Heart right ventricle (tissue), 16 donors: ENCODE measurements at regions of chr12 and their contacts with region 1.

Region 1: DNA sequence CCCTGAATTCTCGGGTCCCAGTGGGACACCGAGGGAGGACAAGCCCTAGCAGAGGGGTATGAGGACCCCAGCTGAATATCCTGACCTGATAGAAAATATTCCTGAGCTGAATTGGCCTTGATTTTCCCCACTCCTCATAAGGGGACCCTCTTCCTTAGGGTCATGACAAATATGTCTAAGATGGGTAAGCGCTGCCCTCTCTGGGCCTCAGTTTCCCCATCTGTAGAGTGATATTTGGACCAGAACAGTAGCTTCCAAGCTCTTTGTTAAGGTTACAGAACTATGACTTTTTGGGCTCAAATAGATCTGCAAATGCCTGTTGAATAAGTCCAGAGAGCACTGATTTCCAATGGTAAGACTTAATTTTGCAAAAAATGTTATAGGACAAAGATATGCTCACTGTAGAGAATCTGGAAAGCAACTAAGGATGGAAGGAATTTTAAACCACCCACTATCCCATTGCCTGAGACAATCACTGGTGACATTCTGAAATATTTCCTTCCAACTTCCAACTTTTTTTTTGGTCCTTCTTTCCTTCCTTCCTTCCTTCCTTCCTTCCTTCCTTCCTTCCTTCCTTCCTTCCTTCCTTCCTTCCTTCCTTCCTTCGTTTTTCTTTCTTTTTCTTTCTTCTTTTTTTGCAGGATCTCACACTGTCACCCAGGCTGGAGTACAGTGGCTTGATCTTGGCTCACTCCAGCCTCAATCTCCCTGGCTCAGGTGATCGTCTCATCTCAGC is 32.0 kb downstream of the MYL2 start:
- DNase-seq: no peak
- ATAC-seq: peak in 1 of 8 donors; percentile 9
- H3K4me3 ChIP-seq: peak overlapping the region in 5 of 10 donors; percentile 39 to 60 (median 58)
- H3K27ac ChIP-seq: peak overlapping the region in 1 of 10 donors; percentile 59
- H3K4me1 ChIP-seq: peaks cover 0 to 16% (median 7%) of the 10 kb centered on the region in 9 donors
- H3K27me3 ChIP-seq: no peaks in the 10 kb centered on the region
- CTCF ChIP-seq: peak in 4 of 9 donors; percentile 2 to 43 (median 15)

Region 2: DNA sequence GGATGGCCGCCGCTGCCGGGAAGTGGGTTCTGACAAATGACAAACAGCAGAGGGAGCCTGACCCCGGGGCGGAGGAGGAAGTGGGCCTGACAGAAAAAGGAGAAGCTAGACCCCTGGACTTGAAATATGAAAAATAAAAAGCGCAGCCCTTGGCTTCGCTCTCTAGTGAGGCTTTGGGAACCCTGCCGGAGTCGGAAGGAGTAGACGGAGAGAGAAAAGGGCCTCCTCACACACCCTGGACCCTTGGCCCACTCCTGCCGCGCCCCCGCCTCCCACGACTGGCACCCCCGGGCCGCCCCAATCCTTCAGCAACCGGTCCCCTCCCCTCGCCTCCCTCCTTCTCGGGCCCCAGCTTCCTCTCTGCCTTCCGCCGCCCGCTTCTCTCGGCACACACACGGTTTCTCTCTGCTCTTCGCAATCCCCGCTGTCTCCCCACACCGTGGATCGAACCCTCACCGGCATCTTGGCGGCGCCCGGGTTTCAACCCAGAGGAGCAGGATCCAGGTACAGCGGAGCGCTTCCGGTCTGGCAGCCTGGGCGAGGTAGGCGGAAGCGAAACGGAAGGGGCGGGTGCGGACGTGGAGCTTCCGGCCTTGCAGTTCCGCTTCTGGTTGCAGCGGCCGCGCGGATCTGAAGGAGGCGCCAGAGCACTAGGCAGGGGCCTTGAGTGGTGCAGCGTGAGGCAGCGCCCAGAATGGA is 438.5 kb before region 1 on chr12 and contains the start of gene ARPC3:
- intact Hi-C with region 1: loop called in 4 of 10 experiments (anchors 1 to 10 kb)
- DNase-seq: peak; percentile 94 to 95
- ATAC-seq: peak; percentile 98 to 100 (median 99)
- H3K4me3 ChIP-seq: peak within 1 kb of the TSS; percentile 61 to 95 (median 81)
- H3K27ac ChIP-seq: peak within 1 kb of the TSS; percentile 80 to 99 (median 94)
- H3K4me1 ChIP-seq: peaks cover 0 to 49% (median 22%) of the 10 kb centered on the region in 9 donors
- H3K27me3 ChIP-seq: no peaks in the 10 kb centered on the region
- CTCF ChIP-seq: peak; percentile 69 to 97 (median 88)
- total RNA-seq, gene ARPC3: 71.9 to 168 (median 82.6) TPM

Region 3: DNA sequence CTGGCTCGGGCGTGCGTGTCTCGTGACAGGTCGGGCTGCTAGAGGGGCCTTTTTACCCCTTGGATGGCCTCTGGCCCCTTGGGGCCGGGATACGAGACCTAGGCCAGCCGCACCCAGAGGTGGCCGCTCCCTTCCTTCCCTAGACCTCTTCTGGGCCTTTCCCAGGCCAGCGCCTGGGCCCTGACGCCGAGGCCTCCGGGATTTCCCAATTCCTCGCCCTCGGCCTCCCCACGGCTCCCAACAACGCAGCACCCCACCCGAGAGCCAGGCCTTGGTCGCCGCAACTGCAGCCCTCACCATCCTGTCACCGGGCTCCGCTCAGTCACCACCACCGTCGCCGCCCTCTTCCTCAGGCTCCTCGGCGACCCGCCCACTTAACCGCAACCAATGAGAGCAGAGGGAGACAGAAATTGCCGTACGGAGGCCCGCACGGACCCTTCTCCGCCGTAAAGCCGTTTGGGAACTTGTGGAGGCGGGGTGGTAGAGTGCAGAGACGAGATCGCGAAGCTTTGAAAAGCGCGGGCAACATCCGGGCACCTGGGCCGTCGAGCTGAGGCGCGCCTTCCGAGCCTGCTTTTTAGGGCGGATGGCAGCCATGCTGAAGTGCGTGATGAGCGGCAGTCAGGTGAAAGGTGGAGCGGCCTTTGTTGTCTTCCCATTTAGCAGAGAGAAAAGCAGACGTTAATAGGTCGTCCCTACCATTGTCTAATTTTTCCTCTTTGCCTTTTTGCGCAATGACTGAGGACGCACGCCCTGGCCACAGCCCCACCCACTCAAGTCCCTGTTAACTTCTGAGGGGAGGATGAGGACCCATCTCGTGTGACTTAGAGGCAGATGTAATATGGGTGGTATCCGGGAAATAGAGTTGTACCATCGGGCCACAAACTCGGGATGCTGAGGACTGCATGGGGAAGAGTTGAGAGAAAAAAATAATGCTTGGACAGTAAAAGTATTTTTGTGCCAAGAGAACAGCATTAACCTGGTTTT is 386.4 kb before region 1 on chr12 and contains the starts of genes RAD9B and VPS29:
- intact Hi-C with region 1: loop called in 1 of 10 experiments (anchors 5 kb)
- DNase-seq: peak; percentile 98 to 99
- ATAC-seq: peak; percentile 97 to 100 (median 99)
- H3K4me3 ChIP-seq: peak within 1 kb of the TSS; percentile 70 to 98 (median 85)
- H3K27ac ChIP-seq: peak within 1 kb of the TSS; percentile 59 to 95 (median 91)
- H3K4me1 ChIP-seq: peaks cover 0 to 40% (median 35%) of the 10 kb centered on the region in 9 donors
- H3K27me3 ChIP-seq: no peaks in the 10 kb centered on the region
- CTCF ChIP-seq: no peak
- total RNA-seq, gene RAD9B: 0.23 to 1.6 (median 0.95) TPM
- total RNA-seq, gene VPS29: 83.7 to 117 (median 91.5) TPM

Region 4: DNA sequence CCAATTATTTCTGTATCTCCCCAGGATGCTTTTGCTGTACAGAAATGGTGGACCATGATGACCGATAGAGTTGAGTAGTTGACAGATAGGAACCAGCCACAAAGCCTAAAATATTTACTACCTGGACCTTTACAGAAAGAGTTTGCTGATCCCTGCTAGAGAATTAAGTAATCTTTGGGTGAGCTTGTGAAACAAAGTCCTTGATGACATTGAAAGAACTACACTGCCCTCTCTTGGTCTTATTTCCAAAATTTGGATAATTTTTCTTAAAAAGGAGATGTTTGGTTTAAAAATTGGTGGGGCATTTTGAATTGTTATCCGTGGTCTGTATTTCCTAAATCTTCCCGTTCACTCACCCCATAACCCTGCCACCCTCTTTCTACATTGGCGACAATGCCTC is 288.2 kb before region 1 on chr12:
- intact Hi-C with region 1: loop called in 2 of 10 experiments (anchors 5 to 10 kb)
- DNase-seq: no peak
- ATAC-seq: peak in 3 of 8 donors; percentile 51 to 56 (median 54)
- H3K4me3 ChIP-seq: no peak overlapping the region
- H3K27ac ChIP-seq: peak overlapping the region in 1 of 10 donors; percentile 59
- H3K4me1 ChIP-seq: peaks cover 0 to 26% (median 0%) of the 10 kb centered on the region in 9 donors
- H3K27me3 ChIP-seq: no peaks in the 10 kb centered on the region
- CTCF ChIP-seq: peak in 8 of 9 donors; percentile 6 to 59 (median 50)

Region 5: GRCh38 chr12:110613771-110614684 is 274.4 kb before region 1 on chr12 and contains the start of gene TCTN1:
- intact Hi-C with region 1: loop called in 6 of 10 experiments (anchors 5 to 10 kb)
- DNase-seq: peak; percentile 97 to 98
- ATAC-seq: peak; percentile 98 to 100 (median 99)
- H3K4me3 ChIP-seq: peak within 1 kb of the TSS; percentile 50 to 86 (median 72)
- H3K27ac ChIP-seq: peak within 1 kb of the TSS in 9 of 10 donors; percentile 52 to 88 (median 76)
- H3K4me1 ChIP-seq: peaks cover 0 to 19% (median 7%) of the 10 kb centered on the region in 9 donors
- H3K27me3 ChIP-seq: no peaks in the 10 kb centered on the region
- CTCF ChIP-seq: peak in 4 of 9 donors; percentile 9 to 33 (median 23)
- total RNA-seq, gene TCTN1: 14.2 to 31.9 (median 25.2) TPM

Region 6: GRCh38 chr12:110742718-110743570 is 145.5 kb before region 1 on chr12 and contains the start of gene PPP1CC:
- intact Hi-C with region 1: loop called in 3 of 10 experiments (anchors 5 to 10 kb)
- DNase-seq: peak; percentile 93 to 94
- ATAC-seq: peak; percentile 94 to 97 (median 96)
- H3K4me3 ChIP-seq: peak within 1 kb of the TSS; percentile 71 to 99 (median 94)
- H3K27ac ChIP-seq: peak within 1 kb of the TSS; percentile 70 to 94 (median 92)
- H3K4me1 ChIP-seq: peaks cover 12 to 63% (median 55%) of the 10 kb centered on the region in 9 donors
- H3K27me3 ChIP-seq: no peaks in the 10 kb centered on the region
- CTCF ChIP-seq: peak in 2 of 9 donors; percentile 8 to 36
- total RNA-seq, gene PPP1CC: 116 to 248 (median 137) TPM

Region 7: GRCh38 chr12:110846615-110847566 is 41.5 kb before region 1 on chr12 and contains the start of gene CCDC63:
- intact Hi-C with region 1: loop called in 2 of 10 experiments (anchors 5 kb)
- DNase-seq: peak; percentile 50 to 71
- ATAC-seq: peak; percentile 39 to 69 (median 54)
- H3K4me3 ChIP-seq: peak within 1 kb of the TSS in 9 of 10 donors; percentile 10 to 58 (median 43)
- H3K27ac ChIP-seq: peak within 1 kb of the TSS in 3 of 10 donors; percentile 41 to 75 (median 74)
- H3K4me1 ChIP-seq: peaks cover 0 to 31% (median 12%) of the 10 kb centered on the region in 9 donors
- H3K27me3 ChIP-seq: peaks cover 0 to 34% (median 5%) of the 10 kb centered on the region in 7 donors
- CTCF ChIP-seq: peak; percentile 2 to 73 (median 45)
- total RNA-seq, gene CCDC63: not detected